Activated CD8-positive, alpha-beta T cell treated with anti-CD3 and anti-CD28 coated beads for 36 hours (primary cell): ENCODE measurements at regions of chr3 and their contacts with region 1.

Region 1: DNA sequence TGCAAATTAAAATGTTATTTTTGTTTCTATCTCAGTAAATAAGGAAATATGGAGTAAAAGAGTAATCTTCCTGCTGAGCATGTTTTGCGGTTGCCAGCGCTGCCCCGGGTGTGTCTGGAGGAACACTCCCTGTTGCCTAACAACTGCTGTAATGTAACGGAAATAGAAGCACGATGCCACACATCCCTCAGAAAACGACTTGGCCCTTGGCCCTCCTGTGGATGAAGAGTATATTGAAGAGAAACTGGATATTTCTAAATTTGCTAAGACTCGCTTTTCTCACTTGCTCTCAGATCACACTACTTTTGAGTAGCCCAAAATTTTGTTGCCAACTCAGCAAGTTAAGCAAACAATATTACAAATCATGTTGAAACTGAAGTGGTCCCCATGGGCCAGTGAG is 18.9 kb downstream of the CX3CR1 start:
- DNase-seq: peak; percentile 76
- ATAC-seq: peak; percentile 89
- H3K4me3 Mint-ChIP-seq: no peak overlapping the region
- H3K27ac Mint-ChIP-seq: no peak overlapping the region
- H3K4me1 Mint-ChIP-seq: peaks cover 75% of the 10 kb centered on the region
- H3K27me3 Mint-ChIP-seq: peaks cover 10% of the 10 kb centered on the region
- CTCF ChIP-seq: peak; percentile 64

Region 2: DNA sequence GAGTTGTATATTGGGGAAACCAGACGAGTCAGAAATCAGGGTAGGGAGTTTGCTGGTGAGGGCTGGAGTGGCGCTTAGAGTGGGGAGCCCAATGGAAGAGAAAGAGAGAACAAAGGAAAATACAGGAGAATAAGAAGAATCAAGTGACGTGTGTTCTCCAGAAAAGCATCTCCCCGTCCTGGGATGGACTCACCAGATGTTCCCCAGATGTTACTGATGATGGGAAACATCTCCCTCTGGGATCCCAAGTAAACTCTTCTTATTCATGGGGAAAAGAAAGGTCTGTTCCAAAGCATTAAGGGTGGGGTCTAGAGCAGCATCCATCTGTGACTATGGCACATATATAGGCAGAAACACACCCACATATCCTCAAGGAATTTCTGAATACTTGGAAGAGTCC is 104.5 kb before region 1 on chr3:
- CTCF ChIA-PET with region 1: no interaction called
- POLR2A ChIA-PET with region 1: no interaction called
- intact Hi-C with region 1: no loop called
- DNase-seq: no peak
- ATAC-seq: no peak
- H3K4me3 Mint-ChIP-seq: no peak overlapping the region
- H3K27ac Mint-ChIP-seq: peak overlapping the region; percentile 17
- H3K4me1 Mint-ChIP-seq: peaks cover 24% of the 10 kb centered on the region
- H3K27me3 Mint-ChIP-seq: peaks cover 1% of the 10 kb centered on the region
- CTCF ChIP-seq: no peak

Region 3: DNA sequence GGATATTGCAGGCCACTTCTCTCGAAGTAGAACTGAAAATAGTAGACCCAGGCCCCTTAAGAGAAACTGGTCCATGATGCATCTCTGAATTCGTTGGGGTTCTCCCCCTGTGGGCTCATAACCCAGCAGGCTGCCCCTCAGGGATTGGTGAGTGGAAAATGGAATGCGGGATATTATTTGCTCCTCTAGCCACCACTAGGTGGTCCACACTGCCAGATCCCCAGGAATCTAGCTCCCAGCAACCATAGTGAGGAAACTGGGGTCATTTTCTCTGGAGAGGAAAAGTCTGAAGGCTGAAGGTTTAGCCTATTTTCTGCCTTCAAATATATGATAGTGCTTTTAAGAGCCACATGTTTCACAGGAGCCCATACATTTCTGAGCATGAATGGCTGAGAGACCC is 12.2 kb after region 1 on chr3:
- CTCF ChIA-PET with region 1: interaction called, 17 read pairs
- POLR2A ChIA-PET with region 1: interaction called, 3 read pairs
- intact Hi-C with region 1: no loop called
- DNase-seq: no peak
- ATAC-seq: no peak
- H3K4me3 Mint-ChIP-seq: no peak overlapping the region
- H3K27ac Mint-ChIP-seq: no peak overlapping the region
- H3K4me1 Mint-ChIP-seq: peaks cover 16% of the 10 kb centered on the region
- H3K27me3 Mint-ChIP-seq: peaks cover 3% of the 10 kb centered on the region
- CTCF ChIP-seq: no peak

Region 4: GRCh38 chr3:39327746-39328349 is 66.9 kb after region 1 on chr3:
- CTCF ChIA-PET with region 1: no interaction called
- POLR2A ChIA-PET with region 1: no interaction called
- intact Hi-C with region 1: no loop called
- DNase-seq: peak; percentile 24
- ATAC-seq: peak; percentile 67
- H3K4me3 Mint-ChIP-seq: no peak overlapping the region
- H3K27ac Mint-ChIP-seq: peak overlapping the region; percentile 27
- H3K4me1 Mint-ChIP-seq: peaks cover 34% of the 10 kb centered on the region
- H3K27me3 Mint-ChIP-seq: no peaks in the 10 kb centered on the region
- CTCF ChIP-seq: no peak

Region 5: GRCh38 chr3:39378088-39378487 is 117.1 kb after region 1 on chr3:
- CTCF ChIA-PET with region 1: no interaction called
- POLR2A ChIA-PET with region 1: no interaction called
- intact Hi-C with region 1: no loop called
- DNase-seq: peak; percentile 74
- ATAC-seq: peak; percentile 87
- H3K4me3 Mint-ChIP-seq: no peak overlapping the region
- H3K27ac Mint-ChIP-seq: no peak overlapping the region
- H3K4me1 Mint-ChIP-seq: peaks cover 5% of the 10 kb centered on the region
- H3K27me3 Mint-ChIP-seq: no peaks in the 10 kb centered on the region
- CTCF ChIP-seq: peak; percentile 75